Activated CD4-positive, alpha-beta T cell treated with anti-CD3 and anti-CD28 coated beads for 36 hours (primary cell): ENCODE measurements at regions of chr9 and their contacts with region 1.

Region 1: GRCh38 chr9:89418882-89419640 is 78.9 kb downstream of the SEMA4D start:
- DNase-seq: peak; percentile 85
- ATAC-seq: peak; percentile 22
- H3K4me3 Mint-ChIP-seq: peak overlapping the region; percentile 74
- H3K27ac Mint-ChIP-seq: peak overlapping the region; percentile 88
- H3K4me1 Mint-ChIP-seq: peaks cover 93% of the 10 kb centered on the region
- H3K27me3 Mint-ChIP-seq: no peaks in the 10 kb centered on the region

Region 2: GRCh38 chr9:89318123-89319014 is 100.7 kb before region 1 on chr9 and contains the start of gene SECISBP2:
- CTCF ChIA-PET with region 1: interaction called, 3 read pairs
- POLR2A ChIA-PET with region 1: interaction called, 3 read pairs
- intact Hi-C with region 1: loop called (anchors 1 to 2 kb)
- DNase-seq: peak; percentile 97
- ATAC-seq: peak; percentile 90
- H3K4me3 Mint-ChIP-seq: peak within 1 kb of the TSS; percentile 82
- H3K27ac Mint-ChIP-seq: peak within 1 kb of the TSS; percentile 98
- H3K4me1 Mint-ChIP-seq: peaks cover 79% of the 10 kb centered on the region
- H3K27me3 Mint-ChIP-seq: no peaks in the 10 kb centered on the region
- total RNA-seq, gene SECISBP2: 38.6 to 49.9 TPM

Region 3: GRCh38 chr9:89466451-89467277 is 47.6 kb after region 1 on chr9:
- CTCF ChIA-PET with region 1: interaction called, 4 read pairs
- POLR2A ChIA-PET with region 1: no interaction called
- intact Hi-C with region 1: loop called (anchors 1 kb)
- DNase-seq: peak; percentile 80
- ATAC-seq: peak; percentile 73
- H3K4me3 Mint-ChIP-seq: peak overlapping the region; percentile 62
- H3K27ac Mint-ChIP-seq: peak overlapping the region; percentile 95
- H3K4me1 Mint-ChIP-seq: peaks cover 96% of the 10 kb centered on the region
- H3K27me3 Mint-ChIP-seq: no peaks in the 10 kb centered on the region

Region 4: DNA sequence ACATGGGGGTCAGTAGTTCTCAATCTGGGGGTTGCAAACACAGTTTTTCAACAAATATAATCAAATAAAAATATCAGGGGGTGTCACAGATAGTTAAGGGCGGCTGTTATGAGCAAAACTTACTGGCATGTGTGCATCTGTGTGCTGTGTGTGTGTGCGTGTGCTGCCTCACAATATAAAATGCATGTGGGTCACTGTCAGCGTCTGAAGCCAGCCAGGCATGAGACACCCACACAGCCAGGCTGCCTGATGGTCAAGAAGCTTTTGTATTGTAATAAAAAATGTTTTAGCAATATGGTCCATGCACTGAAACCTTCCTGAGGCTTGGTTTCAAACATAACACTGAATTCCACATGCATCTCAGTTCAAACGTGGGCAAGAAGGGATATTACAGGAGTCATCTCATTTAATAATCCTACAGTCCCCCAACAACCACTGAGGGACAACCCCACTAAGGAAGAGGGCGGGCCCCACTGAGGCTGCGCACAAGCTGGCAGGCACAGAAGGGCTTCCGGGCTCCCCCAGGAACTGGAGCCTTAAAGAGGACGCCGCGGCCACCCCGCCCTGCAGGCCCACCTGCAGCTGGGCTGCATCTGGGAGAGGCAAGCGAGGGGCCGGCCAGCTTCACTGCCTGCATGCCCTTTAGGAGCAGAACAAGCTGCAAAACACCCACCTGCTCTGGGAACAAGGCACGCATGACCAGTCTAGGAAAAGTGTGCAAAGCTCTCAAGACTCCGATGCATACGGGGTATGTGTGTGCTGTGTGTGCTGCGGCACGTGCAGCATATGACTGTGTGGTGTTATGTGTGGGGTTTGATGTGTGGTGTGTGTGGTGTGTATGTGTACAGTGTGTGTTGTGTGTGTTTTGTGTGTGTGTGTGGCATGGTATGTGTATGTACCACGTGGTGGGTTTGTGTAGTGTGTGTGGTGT is 64.8 kb after region 1 on chr9:
- CTCF ChIA-PET with region 1: interaction called, 5 read pairs
- POLR2A ChIA-PET with region 1: no interaction called
- intact Hi-C with region 1: loop called in 1 of 2 experiments (anchors 1 kb)
- DNase-seq: peak; percentile 79
- ATAC-seq: peak; percentile 57
- H3K4me3 Mint-ChIP-seq: peak overlapping the region; percentile 79
- H3K27ac Mint-ChIP-seq: peak overlapping the region; percentile 93
- H3K4me1 Mint-ChIP-seq: peaks cover 91% of the 10 kb centered on the region
- H3K27me3 Mint-ChIP-seq: no peaks in the 10 kb centered on the region

Region 5: GRCh38 chr9:89522261-89522958 is 103.3 kb after region 1 on chr9:
- CTCF ChIA-PET with region 1: no interaction called
- POLR2A ChIA-PET with region 1: interaction called, 3 read pairs
- intact Hi-C with region 1: loop called in 1 of 2 experiments (anchors 1 kb)
- DNase-seq: peak; percentile 86
- ATAC-seq: peak; percentile 90
- H3K4me3 Mint-ChIP-seq: peak overlapping the region; percentile 62
- H3K27ac Mint-ChIP-seq: peak overlapping the region; percentile 97
- H3K4me1 Mint-ChIP-seq: peaks cover 94% of the 10 kb centered on the region
- H3K27me3 Mint-ChIP-seq: no peaks in the 10 kb centered on the region

Region 6: DNA sequence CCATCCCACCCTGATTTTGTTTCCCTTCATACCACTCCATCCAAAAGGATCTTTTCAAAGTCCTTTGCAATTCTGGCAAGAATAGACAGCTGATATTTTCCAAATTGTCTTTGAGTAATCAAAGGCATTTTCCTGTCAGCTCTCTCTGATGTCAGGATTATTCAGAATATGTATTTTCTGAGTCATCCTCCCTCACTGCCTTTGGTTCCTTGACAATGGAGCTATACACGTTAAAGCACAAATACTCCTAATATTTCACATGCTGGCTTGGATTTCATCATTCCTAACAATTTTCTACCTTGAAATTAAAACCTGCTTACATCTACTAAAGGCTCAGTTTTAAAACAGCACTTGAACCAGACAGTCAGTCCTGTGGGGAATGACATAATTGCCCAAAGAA is 565.2 kb after region 1 on chr9:
- CTCF ChIA-PET with region 1: no interaction called
- POLR2A ChIA-PET with region 1: no interaction called
- intact Hi-C with region 1: loop called (anchors 1 to 5 kb)
- DNase-seq: no peak
- ATAC-seq: peak; percentile 56
- H3K4me3 Mint-ChIP-seq: peak overlapping the region; percentile 27
- H3K27ac Mint-ChIP-seq: peak overlapping the region; percentile 89
- H3K4me1 Mint-ChIP-seq: peaks cover 47% of the 10 kb centered on the region
- H3K27me3 Mint-ChIP-seq: peaks cover 33% of the 10 kb centered on the region